Posterior cingulate gyrus (tissue), 11 donors: ENCODE measurements at regions of chr6 and their contacts with region 1.

Region 1: DNA sequence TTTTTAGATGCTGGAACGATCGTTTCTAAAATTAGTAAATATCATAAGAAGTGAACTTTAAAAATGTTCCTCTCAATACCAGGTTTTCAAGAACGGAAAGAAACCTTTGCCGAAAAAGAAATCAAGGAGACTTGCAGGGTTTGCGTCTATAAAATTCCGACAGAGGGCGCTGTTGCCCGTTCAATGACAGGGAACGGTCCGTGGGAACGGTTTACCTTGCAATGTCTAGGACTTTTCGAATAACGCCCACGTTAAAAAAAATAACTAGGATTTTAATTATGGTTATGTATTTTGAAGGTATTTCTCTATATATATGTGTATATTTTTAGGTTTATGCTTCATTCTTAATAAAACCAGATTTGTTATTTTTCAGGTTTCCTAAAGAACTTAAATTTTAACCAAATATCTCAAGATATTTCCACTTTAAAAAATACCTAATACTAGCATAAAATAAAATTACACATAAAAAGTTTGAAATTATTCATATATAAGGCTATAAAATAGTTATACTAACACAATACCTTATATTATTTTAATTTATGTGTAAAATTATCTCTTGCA is 2.5 kb upstream of the TFAP2B start:
- DNase-seq: peak in 9 of 10 donors; percentile 47 to 95 (median 80)

Region 2: DNA sequence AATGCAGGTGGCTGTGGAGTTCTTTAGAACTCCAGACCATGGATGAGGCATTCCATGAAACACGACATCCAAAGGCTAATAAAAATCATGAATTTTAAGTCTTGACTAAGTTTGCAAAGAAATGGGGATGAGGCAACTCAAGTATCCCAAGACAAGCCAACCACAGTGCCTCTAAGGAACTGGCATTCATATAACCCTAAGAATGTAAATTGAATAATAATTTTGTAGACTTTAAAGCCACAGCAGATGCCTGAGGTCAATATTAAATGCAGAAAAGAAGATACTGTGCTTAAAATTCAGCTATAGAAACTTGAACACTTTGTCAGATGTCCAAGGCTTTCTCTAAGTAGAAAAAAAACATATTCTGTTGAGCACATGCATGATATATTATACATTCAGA is 57.0 kb after region 1 on chr6:
- intact Hi-C with region 1: no loop called
- DNase-seq: no peak

Region 3: DNA sequence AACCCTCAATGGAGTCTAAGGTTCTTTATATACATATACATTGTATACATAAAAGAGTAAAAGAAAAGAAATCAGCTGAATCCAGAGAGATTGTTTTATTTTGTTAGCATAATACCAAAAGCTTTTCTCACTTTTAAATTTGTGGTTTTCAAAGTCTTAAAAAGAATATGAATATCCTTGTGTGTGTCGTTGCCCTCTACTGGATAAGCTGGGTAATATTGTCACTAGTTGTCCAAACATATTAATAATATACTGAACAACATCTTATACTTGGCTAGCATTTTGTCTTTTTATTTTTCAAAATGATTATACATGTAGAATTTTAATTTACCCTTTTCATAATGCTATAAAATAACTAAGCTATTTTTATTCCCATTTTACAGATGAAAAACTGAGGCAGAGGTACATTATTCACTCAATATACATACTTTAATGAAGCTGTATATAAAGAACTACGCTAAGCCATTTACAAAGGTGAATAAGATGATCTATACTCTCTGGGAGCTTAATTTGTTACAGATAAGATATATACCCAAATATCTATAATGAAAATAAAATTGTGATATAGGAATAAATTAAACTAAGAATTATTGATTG is 534.2 kb after region 1 on chr6:
- intact Hi-C with region 1: loop called (anchors 5 kb)
- DNase-seq: no peak

Region 4: DNA sequence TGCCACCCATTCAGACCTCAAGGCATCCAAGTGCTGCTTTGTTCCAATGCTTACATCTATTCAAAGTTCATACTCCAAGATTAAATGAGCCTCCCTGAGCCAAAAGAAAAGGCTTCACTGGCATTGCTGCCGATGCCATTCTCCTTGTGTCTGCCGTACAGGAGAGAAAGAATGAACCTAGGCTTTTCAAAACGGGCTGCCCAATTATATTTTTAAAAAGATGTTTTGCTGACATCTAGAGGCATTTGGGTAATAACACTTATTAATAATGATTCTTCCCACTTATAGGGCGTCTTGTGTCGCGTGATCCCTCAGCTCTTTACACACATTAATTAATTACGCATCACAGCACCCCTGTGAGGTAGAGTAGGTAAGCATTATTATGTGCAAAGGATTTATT is 725.7 kb after region 1 on chr6:
- intact Hi-C with region 1: loop called (anchors 1 kb)
- DNase-seq: no peak

Region 5: GRCh38 chr6:52020945-52021570 is 1204.9 kb after region 1 on chr6:
- intact Hi-C with region 1: loop called (anchors 2 kb)
- DNase-seq: no peak

Region 6: DNA sequence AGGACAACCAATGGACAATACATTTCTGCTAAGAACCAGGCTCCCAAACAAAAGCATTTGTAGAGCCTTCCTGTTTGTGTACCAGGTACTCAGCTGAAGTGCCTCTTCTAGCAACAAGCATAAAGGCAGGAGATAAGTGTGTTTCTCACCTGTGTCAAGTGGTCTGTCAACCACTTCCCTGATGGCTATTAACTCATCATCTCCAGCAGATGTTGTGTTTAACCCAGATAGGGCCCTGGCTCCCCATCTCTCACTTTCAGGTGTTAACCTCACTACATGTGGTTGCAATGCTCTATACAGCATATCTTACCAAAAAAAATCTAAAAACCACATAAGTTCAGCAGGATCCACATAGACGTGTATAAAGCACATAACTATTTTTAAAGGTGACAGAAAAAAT is 1360.4 kb after region 1 on chr6:
- intact Hi-C with region 1: no loop called
- DNase-seq: no peak